OCI-LY7 (cell line): ENCODE measurements at regions of chr5 and their contacts with region 1.

Region 1: GRCh38 chr5:145237843-145238242 is 597.3 kb downstream of the PRELID2 start:
- DNase-seq: peak; percentile 63
- H3K4me3 ChIP-seq: no peak overlapping the region
- H3K27ac ChIP-seq: no peak overlapping the region
- H3K4me1 ChIP-seq: no peaks in the 10 kb centered on the region
- CTCF ChIP-seq: peak; percentile 84

Region 2: GRCh38 chr5:144203750-144204596 is 1033.9 kb before region 1 on chr5:
- CTCF ChIA-PET with region 1: interaction called, 4 read pairs
- POLR2A ChIA-PET with region 1: no interaction called
- intact Hi-C with region 1: loop called (anchors 2 kb)
- DNase-seq: peak; percentile 64
- H3K4me3 ChIP-seq: no peak overlapping the region
- H3K27ac ChIP-seq: no peak overlapping the region
- H3K4me1 ChIP-seq: no peaks in the 10 kb centered on the region
- CTCF ChIP-seq: peak; percentile 94

Region 3: DNA sequence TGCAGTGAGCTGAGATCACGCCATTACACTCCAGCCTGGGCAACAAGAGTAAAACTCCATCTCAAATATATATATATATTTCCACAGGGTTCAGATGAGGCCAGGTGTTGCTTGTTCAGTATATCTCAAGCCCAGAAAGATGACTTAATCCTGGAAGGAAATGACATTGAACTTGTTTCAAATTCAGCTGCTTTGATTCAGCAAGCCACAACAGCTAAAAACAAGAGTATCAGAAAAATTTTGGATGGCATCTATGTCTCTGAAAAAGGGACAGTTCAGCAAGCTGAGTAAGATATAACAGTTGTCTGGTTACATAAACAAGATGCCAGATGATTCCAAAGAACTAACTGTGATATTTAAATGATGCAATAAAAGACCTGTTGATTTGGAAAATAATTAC is 715.1 kb before region 1 on chr5:
- CTCF ChIA-PET with region 1: no interaction called
- POLR2A ChIA-PET with region 1: no interaction called
- intact Hi-C with region 1: loop called (anchors 1 kb)
- DNase-seq: no peak
- H3K4me3 ChIP-seq: no peak overlapping the region
- H3K27ac ChIP-seq: no peak overlapping the region
- H3K4me1 ChIP-seq: no peaks in the 10 kb centered on the region
- CTCF ChIP-seq: no peak

Region 4: DNA sequence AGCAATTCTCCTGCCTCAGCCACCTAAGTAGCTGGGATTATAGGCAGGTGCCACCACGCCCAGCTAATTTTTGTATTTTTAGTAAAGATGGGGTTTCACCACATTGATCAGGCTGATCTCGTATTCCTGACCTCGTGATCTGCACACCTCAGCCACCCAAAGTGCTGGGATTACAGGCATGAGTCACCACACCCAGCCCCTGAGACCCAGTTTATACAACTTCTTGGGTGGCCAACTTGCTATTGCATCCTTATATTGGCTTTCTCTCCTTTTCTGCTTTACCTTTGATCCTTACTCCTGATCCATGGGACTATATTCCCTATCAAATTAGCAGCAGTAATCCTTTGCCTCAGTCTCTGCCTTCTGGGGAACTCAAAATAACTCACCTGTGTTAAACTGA is 61.8 kb before region 1 on chr5:
- CTCF ChIA-PET with region 1: no interaction called
- POLR2A ChIA-PET with region 1: no interaction called
- intact Hi-C with region 1: no loop called
- DNase-seq: no peak
- H3K4me3 ChIP-seq: no peak overlapping the region
- H3K27ac ChIP-seq: no peak overlapping the region
- H3K4me1 ChIP-seq: no peaks in the 10 kb centered on the region
- CTCF ChIP-seq: no peak

Region 5: DNA sequence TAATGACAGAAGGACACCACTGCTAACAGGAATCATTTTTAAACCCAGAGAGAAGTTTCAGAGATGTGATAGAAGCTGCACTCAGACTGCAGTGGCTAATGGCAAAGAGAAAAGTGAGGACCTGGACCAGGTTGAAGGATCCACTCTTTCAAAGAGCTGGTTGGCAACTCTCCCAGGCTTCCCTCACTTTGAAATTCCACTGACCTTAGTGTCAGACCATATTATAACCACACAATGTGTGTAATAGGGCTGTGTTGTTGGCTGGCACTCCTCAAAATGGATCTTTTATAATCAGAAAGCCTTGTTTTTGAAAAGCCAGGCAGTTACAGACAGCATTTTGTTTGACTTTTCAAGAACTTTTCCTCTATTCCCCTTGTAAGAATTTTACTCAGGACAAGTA is 316.6 kb after region 1 on chr5:
- CTCF ChIA-PET with region 1: no interaction called
- POLR2A ChIA-PET with region 1: no interaction called
- intact Hi-C with region 1: no loop called
- DNase-seq: no peak
- H3K4me3 ChIP-seq: no peak overlapping the region
- H3K27ac ChIP-seq: no peak overlapping the region
- H3K4me1 ChIP-seq: no peaks in the 10 kb centered on the region
- CTCF ChIP-seq: no peak

Region 6: DNA sequence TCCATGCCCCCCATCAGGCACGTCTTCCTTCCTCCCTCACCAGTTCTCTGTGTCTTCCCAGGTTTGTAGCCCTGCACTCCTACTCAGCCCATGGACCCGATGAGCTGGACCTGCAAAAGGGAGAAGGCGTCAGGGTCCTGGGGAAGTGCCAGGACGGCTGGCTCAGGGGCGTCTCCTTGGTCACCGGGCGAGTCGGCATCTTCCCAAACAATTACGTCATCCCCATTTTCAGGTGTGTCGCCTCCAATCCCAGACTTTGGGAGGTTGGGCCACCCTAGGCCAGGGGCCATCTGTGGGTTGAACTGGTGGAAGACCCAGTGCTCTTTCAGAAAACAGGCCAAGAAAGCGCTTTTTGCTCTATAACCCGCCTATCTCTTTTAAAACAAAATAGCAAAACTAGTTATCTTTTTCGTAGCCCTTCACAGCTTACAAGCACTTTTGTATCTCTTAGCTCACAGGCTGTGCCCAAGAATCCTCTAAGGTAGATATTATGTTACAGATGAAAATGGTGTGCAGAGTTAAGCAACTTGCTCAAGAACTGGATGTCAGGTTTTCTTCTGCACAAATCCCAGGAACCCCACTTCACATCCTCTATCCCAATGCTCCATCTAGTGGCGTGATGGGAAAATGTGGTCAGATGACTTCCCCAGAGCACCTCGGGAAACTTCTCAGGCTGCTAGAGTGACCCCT is 811.3 kb after region 1 on chr5:
- CTCF ChIA-PET with region 1: no interaction called
- POLR2A ChIA-PET with region 1: no interaction called
- intact Hi-C with region 1: no loop called
- DNase-seq: peak; percentile 23
- H3K4me3 ChIP-seq: no peak overlapping the region
- H3K27ac ChIP-seq: no peak overlapping the region
- H3K4me1 ChIP-seq: no peaks in the 10 kb centered on the region
- CTCF ChIP-seq: peak; percentile 74